Activated naive CD4-positive, alpha-beta T cell treated with anti-CD3 and anti-CD28 coated beads for 36 hours (primary cell): ENCODE measurements at regions of chr13 and their contacts with region 1.

Region 1: DNA sequence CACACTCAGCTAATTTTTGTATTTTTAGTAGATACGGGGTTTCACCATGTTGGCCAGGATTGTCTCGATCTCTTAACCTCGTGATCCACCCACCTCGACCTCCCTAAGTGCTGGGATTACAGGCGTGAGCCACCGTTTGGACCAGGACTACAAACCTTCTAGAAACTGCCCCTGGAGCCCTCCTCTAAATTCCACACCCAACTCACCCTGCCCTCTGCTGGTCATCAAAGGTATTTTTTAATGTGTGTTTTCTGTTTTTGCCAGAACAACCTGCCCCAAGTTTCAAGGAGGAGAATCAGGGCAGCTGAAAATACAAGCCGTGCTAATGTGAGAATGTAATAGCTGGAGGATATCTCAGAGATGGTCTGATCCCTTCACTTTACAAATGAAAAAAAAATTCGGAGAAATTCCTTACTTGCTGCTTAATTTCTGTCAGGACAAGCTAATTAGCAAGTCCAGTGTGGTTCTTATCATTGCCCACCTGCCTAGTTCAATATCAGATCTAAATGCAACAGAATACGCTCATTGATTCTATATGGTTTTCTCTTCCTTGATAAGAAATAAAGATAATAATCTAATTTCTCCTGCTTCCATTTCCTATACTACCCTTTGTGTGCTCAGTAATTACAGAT is 4.1 kb downstream of the ATP8A2 start:
- DNase-seq: peak; percentile 40
- H3K4me3 Mint-ChIP-seq: no peak overlapping the region
- H3K27ac Mint-ChIP-seq: no peak overlapping the region
- H3K4me1 Mint-ChIP-seq: peaks cover 4% of the 10 kb centered on the region
- H3K27me3 Mint-ChIP-seq: peaks cover 46% of the 10 kb centered on the region

Region 2: DNA sequence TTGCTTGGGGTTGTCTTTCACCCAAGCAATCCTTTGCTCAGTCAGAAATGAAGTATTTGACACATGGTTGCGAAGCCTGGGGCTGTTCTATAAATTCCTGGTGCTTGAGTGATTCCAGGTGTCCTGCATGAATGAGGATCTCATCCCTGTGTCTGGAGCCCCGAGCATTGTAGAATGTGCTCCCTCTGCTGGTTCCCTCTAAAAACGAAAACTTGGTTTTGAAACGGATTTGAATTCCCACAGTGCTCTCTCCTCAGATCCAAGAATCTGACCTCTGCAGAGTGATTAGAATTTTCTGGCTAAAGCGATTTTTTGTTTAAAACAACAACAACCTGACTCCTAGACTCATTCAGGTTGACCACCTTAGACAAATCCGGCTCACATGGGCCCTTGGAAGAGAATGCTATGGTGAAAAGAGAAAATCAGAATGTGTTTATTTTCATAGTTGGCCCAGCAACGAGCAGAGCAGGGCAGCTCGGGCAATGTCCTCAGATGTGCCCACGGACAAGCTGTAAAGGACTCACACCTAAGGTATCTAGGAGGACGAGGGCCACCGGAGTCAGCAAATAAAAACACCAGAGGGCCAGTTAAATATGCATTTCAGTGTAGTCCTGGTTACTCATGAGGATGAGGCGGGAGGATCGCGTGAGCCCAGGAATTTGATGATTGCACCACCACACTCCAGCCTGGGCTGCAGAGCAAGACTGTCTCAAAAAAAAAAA is 704.3 kb before region 1 on chr13:
- CTCF ChIA-PET with region 1: no interaction called
- intact Hi-C with region 1: no loop called
- DNase-seq: no peak
- H3K4me3 Mint-ChIP-seq: no peak overlapping the region
- H3K27ac Mint-ChIP-seq: no peak overlapping the region
- H3K4me1 Mint-ChIP-seq: peaks cover 10% of the 10 kb centered on the region
- H3K27me3 Mint-ChIP-seq: peaks cover 29% of the 10 kb centered on the region

Region 3: GRCh38 chr13:24842549-24843274 is 533.1 kb before region 1 on chr13:
- CTCF ChIA-PET with region 1: no interaction called
- intact Hi-C with region 1: no loop called
- DNase-seq: no peak
- H3K4me3 Mint-ChIP-seq: no peak overlapping the region
- H3K27ac Mint-ChIP-seq: no peak overlapping the region
- H3K4me1 Mint-ChIP-seq: no peaks in the 10 kb centered on the region
- H3K27me3 Mint-ChIP-seq: peaks cover 5% of the 10 kb centered on the region

Region 4: DNA sequence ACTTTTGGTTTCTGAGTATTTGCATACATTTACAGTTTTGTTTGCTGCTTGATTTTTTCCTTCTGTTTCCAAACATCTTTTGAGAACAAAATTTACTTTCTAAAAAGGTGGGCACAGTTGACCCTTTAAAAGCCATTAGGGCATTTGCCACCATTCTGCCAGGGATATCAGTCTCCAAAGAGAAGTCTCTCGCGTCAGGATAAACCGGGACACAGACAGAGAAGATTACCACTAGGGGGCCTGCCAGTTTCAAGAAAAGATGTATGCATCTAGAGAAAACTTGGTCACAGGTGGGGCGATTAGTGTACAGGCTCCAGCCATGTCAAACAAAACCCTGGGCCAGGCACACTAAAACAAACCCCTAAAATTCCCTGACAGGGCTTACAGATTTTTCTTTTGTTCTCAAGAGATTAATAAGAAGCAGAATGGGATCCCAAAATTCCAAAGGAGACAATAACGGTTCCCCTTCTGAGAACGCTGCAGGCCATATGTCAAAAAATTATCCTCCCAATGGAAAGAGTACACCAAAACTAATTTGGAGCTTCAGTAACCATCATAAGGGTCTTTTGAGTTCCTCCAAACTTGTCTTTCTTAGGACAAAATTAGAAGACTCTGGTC is 290.6 kb before region 1 on chr13:
- CTCF ChIA-PET with region 1: interaction called, 3 read pairs
- intact Hi-C with region 1: loop called (anchors 2 kb)
- DNase-seq: peak; percentile 45
- H3K4me3 Mint-ChIP-seq: no peak overlapping the region
- H3K27ac Mint-ChIP-seq: no peak overlapping the region
- H3K4me1 Mint-ChIP-seq: no peaks in the 10 kb centered on the region
- H3K27me3 Mint-ChIP-seq: peaks cover 8% of the 10 kb centered on the region

Region 5: GRCh38 chr13:25214491-25215252 is 161.2 kb before region 1 on chr13:
- CTCF ChIA-PET with region 1: interaction called, 4 read pairs
- intact Hi-C with region 1: loop called (anchors 1 kb)
- DNase-seq: no peak
- H3K4me3 Mint-ChIP-seq: no peak overlapping the region
- H3K27ac Mint-ChIP-seq: no peak overlapping the region
- H3K4me1 Mint-ChIP-seq: no peaks in the 10 kb centered on the region
- H3K27me3 Mint-ChIP-seq: peaks cover 5% of the 10 kb centered on the region

Region 6: DNA sequence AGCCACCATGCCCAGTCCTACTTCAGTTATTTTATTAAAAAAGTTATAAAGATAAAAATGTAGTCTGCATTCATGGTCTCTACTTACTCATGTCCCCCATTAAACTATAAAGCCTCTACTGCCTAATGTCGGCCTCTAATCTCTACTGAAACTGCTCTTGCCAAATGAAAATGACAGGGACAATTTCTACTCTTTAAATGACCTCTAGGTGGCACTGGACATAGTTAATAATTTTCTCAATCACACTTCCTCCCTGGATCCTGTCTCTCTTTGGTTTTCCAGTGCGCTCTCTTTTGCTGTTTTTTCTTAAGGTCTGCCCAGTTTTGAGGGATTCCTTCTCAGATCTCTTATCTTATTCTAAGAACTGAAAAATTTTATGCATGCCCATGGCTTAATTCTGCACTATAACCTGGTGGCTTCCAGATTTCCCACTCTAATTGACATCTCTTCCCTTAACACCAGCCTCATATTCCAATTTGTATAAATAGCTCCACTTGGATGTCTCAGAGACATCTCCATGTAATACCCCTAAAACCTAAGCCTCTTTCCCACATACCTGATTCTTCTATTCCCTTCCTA is 142.8 kb before region 1 on chr13:
- CTCF ChIA-PET with region 1: interaction called, 15 read pairs
- intact Hi-C with region 1: loop called (anchors 1 kb)
- DNase-seq: no peak
- H3K4me3 Mint-ChIP-seq: no peak overlapping the region
- H3K27ac Mint-ChIP-seq: no peak overlapping the region
- H3K4me1 Mint-ChIP-seq: peaks cover 2% of the 10 kb centered on the region
- H3K27me3 Mint-ChIP-seq: peaks cover 4% of the 10 kb centered on the region

Region 7: GRCh38 chr13:25267715-25268114 is 108.1 kb before region 1 on chr13:
- CTCF ChIA-PET with region 1: interaction called, 5 read pairs
- intact Hi-C with region 1: loop called (anchors 1 kb)
- DNase-seq: no peak
- H3K4me3 Mint-ChIP-seq: no peak overlapping the region
- H3K27ac Mint-ChIP-seq: no peak overlapping the region
- H3K4me1 Mint-ChIP-seq: peaks cover 6% of the 10 kb centered on the region
- H3K27me3 Mint-ChIP-seq: no peaks in the 10 kb centered on the region

Region 8: GRCh38 chr13:25692099-25692498 is 316.3 kb after region 1 on chr13:
- CTCF ChIA-PET with region 1: no interaction called
- intact Hi-C with region 1: no loop called
- DNase-seq: no peak
- H3K4me3 Mint-ChIP-seq: no peak overlapping the region
- H3K27ac Mint-ChIP-seq: no peak overlapping the region
- H3K4me1 Mint-ChIP-seq: no peaks in the 10 kb centered on the region
- H3K27me3 Mint-ChIP-seq: peaks cover 7% of the 10 kb centered on the region